Motor neuron (in vitro differentiated cells): ENCODE measurements at regions of chr11 and their contacts with region 1.

Region 1: GRCh38 chr11:20337526-20338154 is 25.9 kb upstream of the HTATIP2 start:
- ATAC-seq: peak in 5 of 8 experiments; percentile 37 to 65 (median 43)
- H3K4me3 ChIP-seq: no peak overlapping the region
- H3K27ac ChIP-seq: no peak overlapping the region
- H3K4me1 ChIP-seq: peaks cover 0 to 4% of the 10 kb centered on the region in 2 donors

Region 2: GRCh38 chr11:19071255-19071654 is 1266.4 kb before region 1 on chr11:
- in situ Hi-C with region 1: loop called in 1 of 9 experiments (anchors 25 kb)
- ATAC-seq: peak; percentile 81 to 100 (median 90)
- H3K4me3 ChIP-seq: no peak overlapping the region
- H3K27ac ChIP-seq: no peak overlapping the region
- H3K4me1 ChIP-seq: no peaks in the 10 kb centered on the region

Region 3: GRCh38 chr11:19903620-19904069 is 434.0 kb before region 1 on chr11:
- in situ Hi-C with region 1: loop called in 1 of 9 experiments (anchors 25 kb)
- ATAC-seq: peak; percentile 72 to 91 (median 80)
- H3K4me3 ChIP-seq: no peak overlapping the region
- H3K27ac ChIP-seq: no peak overlapping the region
- H3K4me1 ChIP-seq: peaks cover 0 to 8% of the 10 kb centered on the region in 2 donors

Region 4: DNA sequence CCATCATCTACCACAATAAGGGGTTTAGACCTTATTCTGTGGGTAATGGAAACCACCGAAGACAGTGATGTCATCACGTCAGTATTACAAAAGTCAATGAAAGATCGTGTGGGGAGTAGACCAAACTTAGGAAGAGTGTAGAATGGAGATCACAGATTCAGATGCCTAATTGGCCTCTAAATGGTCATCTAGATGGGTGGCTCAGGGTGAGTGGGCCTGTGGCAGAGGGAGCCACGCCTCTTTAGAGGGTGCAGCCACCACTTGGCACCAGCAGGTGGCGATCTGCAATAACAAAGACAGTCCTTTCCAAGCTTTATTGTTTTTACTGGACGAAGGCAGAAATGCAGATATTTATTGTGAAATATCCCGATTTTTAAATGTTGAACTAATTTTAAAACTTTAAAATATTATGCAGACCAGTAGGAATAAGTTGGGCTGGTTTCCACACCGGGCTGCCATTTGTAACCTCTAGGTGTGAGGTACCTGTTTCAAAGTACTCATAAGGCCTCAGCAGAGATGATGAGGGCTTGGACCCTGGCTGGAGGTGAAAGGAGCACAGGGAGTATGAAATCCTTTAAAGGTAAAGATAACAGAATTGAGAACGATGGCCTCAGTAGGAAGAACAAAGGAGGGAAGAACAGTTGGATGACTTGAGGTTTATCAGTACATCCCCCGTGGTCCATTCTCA is 399.3 kb before region 1 on chr11:
- in situ Hi-C with region 1: loop called in 2 of 9 experiments (anchors 25 kb)
- ATAC-seq: peak in 3 of 8 experiments; percentile 62 to 89 (median 64)
- H3K4me3 ChIP-seq: no peak overlapping the region
- H3K27ac ChIP-seq: no peak overlapping the region
- H3K4me1 ChIP-seq: peaks cover 11 to 16% of the 10 kb centered on the region in 2 donors

Region 5: GRCh38 chr11:20127671-20128527 is 209.7 kb before region 1 on chr11:
- in situ Hi-C with region 1: loop called in 5 of 9 experiments (anchors 10 to 25 kb)
- ATAC-seq: peak; percentile 67 to 90 (median 86)
- H3K4me3 ChIP-seq: no peak overlapping the region
- H3K27ac ChIP-seq: no peak overlapping the region
- H3K4me1 ChIP-seq: no peaks in the 10 kb centered on the region

Region 6: GRCh38 chr11:20158597-20159257 is 178.9 kb before region 1 on chr11:
- in situ Hi-C with region 1: loop called in 1 of 9 experiments (anchors 25 kb)
- ATAC-seq: peak; percentile 64 to 93 (median 74)
- H3K4me3 ChIP-seq: no peak overlapping the region
- H3K27ac ChIP-seq: no peak overlapping the region
- H3K4me1 ChIP-seq: peaks cover 8 to 15% of the 10 kb centered on the region in 2 donors

Region 7: GRCh38 chr11:20243974-20244373 is 93.7 kb before region 1 on chr11:
- in situ Hi-C with region 1: loop called in 1 of 9 experiments (anchors 25 kb)
- ATAC-seq: no peak
- H3K4me3 ChIP-seq: no peak overlapping the region
- H3K27ac ChIP-seq: no peak overlapping the region
- H3K4me1 ChIP-seq: peaks cover 6 to 9% of the 10 kb centered on the region in 2 donors

Region 8: GRCh38 chr11:21411104-21411503 is 1073.5 kb after region 1 on chr11:
- in situ Hi-C with region 1: no loop called
- ATAC-seq: no peak
- H3K4me3 ChIP-seq: no peak overlapping the region
- H3K27ac ChIP-seq: no peak overlapping the region
- H3K4me1 ChIP-seq: peaks cover 0 to 28% of the 10 kb centered on the region in 2 donors